ENCODE measurements at regions of chr9 and their contacts with region 1.

Region 1: DNA sequence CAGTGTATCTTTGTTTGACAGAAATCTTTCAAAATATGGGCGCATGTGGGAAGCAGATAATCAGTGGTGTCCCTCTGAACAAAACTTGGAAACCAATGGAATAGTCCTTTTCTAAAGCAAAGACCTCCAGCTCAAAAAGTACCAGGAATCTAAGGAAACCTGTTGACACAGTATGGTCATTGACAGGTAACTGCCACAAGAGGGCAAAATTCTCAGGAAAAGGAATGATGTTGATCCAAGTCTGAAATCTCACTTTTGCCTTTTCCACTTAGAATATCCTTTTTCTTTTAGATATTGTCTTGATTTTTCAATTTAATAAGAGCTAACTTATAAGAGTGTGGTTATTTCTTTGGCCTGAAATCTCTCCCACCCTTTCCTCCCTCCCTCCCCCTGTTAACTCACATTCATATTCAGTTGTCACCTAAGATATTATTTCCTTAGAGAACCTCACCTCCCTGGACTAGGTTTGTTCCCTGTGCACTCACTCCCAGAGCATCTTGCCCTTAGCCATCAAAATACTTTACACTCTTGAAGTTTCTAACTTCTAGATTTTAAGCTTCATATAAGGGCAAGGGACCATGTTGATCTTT is 59.0 kb upstream of the BARX1 start:
- DNase-seq: no peak
- H3K4me3 Mint-ChIP-seq: no peak overlapping the region
- H3K27ac Mint-ChIP-seq: no peak overlapping the region
- H3K4me1 Mint-ChIP-seq: peaks cover 8% of the 10 kb centered on the region
- H3K27me3 Mint-ChIP-seq: peaks cover 3% of the 10 kb centered on the region

Region 2: DNA sequence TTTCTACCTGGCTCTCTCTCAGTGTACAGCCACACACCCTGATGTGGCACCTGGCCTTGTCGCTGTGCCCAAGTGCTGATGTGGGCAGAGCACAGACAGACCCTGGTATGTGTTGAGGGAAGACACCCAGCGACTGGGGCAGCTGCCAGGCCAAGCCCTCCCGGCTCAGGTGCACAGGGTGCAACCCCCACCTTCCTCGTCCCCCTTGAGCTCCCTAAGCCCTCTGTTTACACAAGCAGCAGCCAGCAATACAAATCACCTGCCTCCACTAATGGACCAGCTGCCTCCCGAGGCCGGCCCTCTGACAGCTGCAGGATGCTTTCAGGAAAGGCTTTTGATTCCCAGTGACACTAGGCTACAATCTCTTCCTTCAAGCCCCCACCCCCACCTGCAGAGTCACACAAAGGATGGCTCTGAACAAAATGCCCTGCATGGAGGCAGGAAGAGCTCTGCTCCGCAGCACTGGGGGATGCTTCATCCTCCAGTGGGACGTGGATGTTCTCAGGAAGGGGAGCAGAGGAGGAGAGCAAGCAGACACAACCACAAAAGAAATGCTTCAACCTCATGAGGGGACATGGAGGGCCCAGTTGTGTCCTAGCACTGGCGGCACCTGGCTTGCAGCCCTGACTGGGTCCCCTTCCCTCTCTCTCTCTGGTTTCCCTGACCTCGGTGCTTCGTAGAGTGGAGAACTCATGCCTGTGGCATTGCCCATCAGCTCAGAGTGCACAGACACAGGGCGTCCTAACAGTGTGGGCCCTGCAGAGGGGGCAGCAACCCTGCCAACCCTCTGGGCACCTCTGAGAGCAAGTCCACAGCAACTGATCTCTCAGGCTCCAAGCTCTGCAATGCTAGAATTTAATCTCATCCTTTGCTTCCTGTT is 199.8 kb before region 1 on chr9:
- CTCF ChIA-PET with region 1: no interaction called
- DNase-seq: no peak
- H3K4me3 Mint-ChIP-seq: no peak overlapping the region
- H3K27ac Mint-ChIP-seq: no peak overlapping the region
- H3K4me1 Mint-ChIP-seq: no peaks in the 10 kb centered on the region
- H3K27me3 Mint-ChIP-seq: peaks cover 33% of the 10 kb centered on the region

Region 3: GRCh38 chr9:94026816-94027215 is 12.7 kb after region 1 on chr9:
- CTCF ChIA-PET with region 1: interaction called, 11 read pairs
- DNase-seq: no peak
- H3K4me3 Mint-ChIP-seq: no peak overlapping the region
- H3K27ac Mint-ChIP-seq: no peak overlapping the region
- H3K4me1 Mint-ChIP-seq: peaks cover 22% of the 10 kb centered on the region
- H3K27me3 Mint-ChIP-seq: peaks cover 4% of the 10 kb centered on the region

Region 4: GRCh38 chr9:94213511-94214124 is 199.5 kb after region 1 on chr9:
- CTCF ChIA-PET with region 1: interaction called, 65 read pairs
- DNase-seq: peak; percentile 81
- H3K4me3 Mint-ChIP-seq: no peak overlapping the region
- H3K27ac Mint-ChIP-seq: no peak overlapping the region
- H3K4me1 Mint-ChIP-seq: peaks cover 4% of the 10 kb centered on the region
- H3K27me3 Mint-ChIP-seq: peaks cover 20% of the 10 kb centered on the region